PC-3 (cell line): ENCODE measurements at regions of chr14 and their contacts with region 1.

Region 1: DNA sequence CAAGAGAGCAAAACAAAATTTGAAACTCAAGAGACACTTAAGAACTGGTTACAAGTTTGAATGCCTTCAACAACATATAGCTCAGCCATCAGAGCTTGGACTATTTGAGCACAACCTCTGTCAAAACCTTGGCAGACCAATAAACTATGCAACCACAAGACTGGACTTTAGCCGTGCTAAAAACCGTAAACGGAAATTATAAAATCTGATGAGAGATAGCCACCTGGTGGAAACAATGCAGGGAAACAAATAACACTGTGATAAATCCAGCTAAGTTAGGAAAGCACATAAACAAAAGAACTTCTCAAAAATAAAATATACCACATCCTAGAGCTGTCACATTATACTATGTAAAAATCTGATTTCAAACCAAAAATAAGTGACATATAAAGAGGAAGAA is 1074.2 kb upstream of the NOVA1 start:
- DNase-seq: peak; percentile 22
- ATAC-seq: peak; percentile 84
- H3K4me3 ChIP-seq: no peak overlapping the region
- H3K27ac ChIP-seq: no peak overlapping the region
- H3K4me1 ChIP-seq: no peaks in the 10 kb centered on the region
- H3K27me3 ChIP-seq: no peaks in the 10 kb centered on the region
- CTCF ChIP-seq: peak; percentile 50; the same call in 1 of the 2 replicates

Region 2: DNA sequence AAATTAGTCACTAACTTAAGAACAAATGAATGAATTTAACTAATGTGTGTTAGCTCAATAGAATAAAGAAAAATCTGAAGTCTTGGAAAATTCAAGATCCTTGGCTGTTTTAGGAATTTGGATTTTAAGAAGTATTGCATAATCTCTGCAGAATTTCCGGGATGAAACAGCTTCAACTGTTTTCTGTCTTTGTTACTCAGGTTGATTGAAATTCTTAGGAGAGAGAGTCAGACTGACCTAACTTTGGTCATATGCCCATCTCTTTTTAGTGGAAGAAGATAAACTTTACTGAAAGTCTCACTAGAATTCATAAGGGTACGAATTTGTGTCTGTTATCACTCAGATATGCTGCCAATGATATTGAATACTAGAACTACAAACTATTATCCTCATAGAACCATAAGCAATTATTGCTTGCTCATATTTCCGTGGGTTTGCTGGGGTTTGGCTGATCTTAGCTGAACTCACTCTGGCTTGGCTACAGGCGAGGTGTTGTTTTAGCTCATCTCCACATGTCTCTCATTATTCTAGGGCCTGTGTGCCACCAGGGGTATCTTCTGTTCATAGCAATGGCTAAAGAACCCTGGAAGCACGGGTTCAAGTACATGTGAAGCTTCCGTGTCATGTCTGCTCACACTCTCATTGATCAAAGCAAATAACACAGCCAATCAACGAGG is 816.8 kb before region 1 on chr14:
- CTCF ChIA-PET with region 1: no interaction called
- POLR2A ChIA-PET with region 1: interaction called, 10 read pairs
- intact Hi-C with region 1: no loop called
- DNase-seq: peak; percentile 57
- ATAC-seq: peak; percentile 40; the same call in 1 of the 2 replicates
- H3K4me3 ChIP-seq: no peak overlapping the region
- H3K27ac ChIP-seq: no peak overlapping the region
- H3K4me1 ChIP-seq: peaks cover 11% of the 10 kb centered on the region
- H3K27me3 ChIP-seq: no peaks in the 10 kb centered on the region
- CTCF ChIP-seq: no peak

Region 3: GRCh38 chr14:27015065-27015464 is 657.0 kb before region 1 on chr14:
- CTCF ChIA-PET with region 1: no interaction called
- POLR2A ChIA-PET with region 1: no interaction called
- intact Hi-C with region 1: no loop called
- DNase-seq: no peak
- ATAC-seq: no peak
- H3K4me3 ChIP-seq: no peak overlapping the region
- H3K27ac ChIP-seq: no peak overlapping the region
- H3K4me1 ChIP-seq: no peaks in the 10 kb centered on the region
- H3K27me3 ChIP-seq: no peaks in the 10 kb centered on the region
- CTCF ChIP-seq: no peak

Region 4: GRCh38 chr14:27205036-27205435 is 467.0 kb before region 1 on chr14:
- CTCF ChIA-PET with region 1: no interaction called
- POLR2A ChIA-PET with region 1: interaction called, 10 read pairs
- intact Hi-C with region 1: no loop called
- DNase-seq: no peak
- ATAC-seq: no peak
- H3K4me3 ChIP-seq: no peak overlapping the region
- H3K27ac ChIP-seq: no peak overlapping the region
- H3K4me1 ChIP-seq: no peaks in the 10 kb centered on the region
- H3K27me3 ChIP-seq: no peaks in the 10 kb centered on the region
- CTCF ChIP-seq: no peak

Region 5: DNA sequence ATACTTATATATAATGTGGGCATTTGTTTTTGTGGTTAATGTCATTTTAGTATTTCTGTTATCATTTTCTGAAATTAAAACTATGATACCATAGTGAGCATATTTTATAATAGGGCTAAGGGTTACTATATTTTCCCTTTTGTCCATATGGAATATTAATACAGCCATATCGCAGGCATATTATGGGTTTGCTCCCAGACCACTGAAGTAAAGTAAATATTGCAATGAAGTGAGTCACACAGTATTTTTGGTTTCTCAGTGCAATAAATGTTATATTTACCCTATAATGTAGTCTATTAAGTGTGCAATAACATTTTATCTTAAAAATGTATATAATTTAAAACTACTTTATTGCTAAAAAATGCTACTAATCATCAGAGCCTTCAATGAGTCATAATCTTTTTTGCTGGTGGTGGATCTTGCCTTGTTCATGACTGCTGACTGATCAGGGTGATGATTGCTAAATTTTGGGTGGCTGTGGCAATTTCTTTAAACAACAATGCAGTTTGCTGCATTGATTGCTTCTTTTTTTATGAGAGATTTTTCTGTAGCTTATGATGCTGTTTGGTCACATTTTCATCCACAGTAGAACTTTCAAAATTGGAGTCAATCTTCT is 29.7 kb before region 1 on chr14:
- CTCF ChIA-PET with region 1: no interaction called
- POLR2A ChIA-PET with region 1: no interaction called
- intact Hi-C with region 1: loop called (anchors 2 kb)
- DNase-seq: peak; percentile 60
- ATAC-seq: peak; percentile 97
- H3K4me3 ChIP-seq: no peak overlapping the region
- H3K27ac ChIP-seq: peak overlapping the region; percentile 68
- H3K4me1 ChIP-seq: peaks cover 10% of the 10 kb centered on the region; the same call in 1 of the 2 replicates
- H3K27me3 ChIP-seq: no peaks in the 10 kb centered on the region
- CTCF ChIP-seq: no peak

Region 6: DNA sequence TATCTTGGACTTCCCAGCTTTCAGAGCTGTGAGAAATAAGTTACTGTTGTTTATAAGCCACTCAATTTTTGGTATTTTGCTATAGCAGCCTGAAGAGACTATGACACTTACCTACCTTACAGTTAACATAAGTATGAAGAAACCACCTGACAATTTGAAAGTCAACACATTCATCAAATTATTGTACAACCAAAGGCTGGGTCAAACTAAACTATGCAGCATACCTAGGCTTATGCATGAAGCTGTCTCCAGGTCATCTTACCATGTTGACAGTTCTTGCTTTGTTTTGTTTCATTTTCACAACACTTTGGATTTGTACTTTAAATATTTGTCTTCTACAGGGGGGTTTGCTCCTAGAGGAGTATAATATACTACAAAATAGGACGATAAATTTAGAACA is 239.6 kb after region 1 on chr14:
- CTCF ChIA-PET with region 1: no interaction called
- POLR2A ChIA-PET with region 1: no interaction called
- intact Hi-C with region 1: no loop called
- DNase-seq: no peak
- ATAC-seq: no peak
- H3K4me3 ChIP-seq: no peak overlapping the region
- H3K27ac ChIP-seq: no peak overlapping the region
- H3K4me1 ChIP-seq: no peaks in the 10 kb centered on the region
- H3K27me3 ChIP-seq: no peaks in the 10 kb centered on the region
- CTCF ChIP-seq: no peak

Region 7: GRCh38 chr14:28060921-28061405 is 388.9 kb after region 1 on chr14:
- CTCF ChIA-PET with region 1: no interaction called
- POLR2A ChIA-PET with region 1: no interaction called
- intact Hi-C with region 1: no loop called
- DNase-seq: no peak
- ATAC-seq: no peak
- H3K4me3 ChIP-seq: no peak overlapping the region
- H3K27ac ChIP-seq: no peak overlapping the region
- H3K4me1 ChIP-seq: no peaks in the 10 kb centered on the region
- H3K27me3 ChIP-seq: no peaks in the 10 kb centered on the region
- CTCF ChIP-seq: no peak

Region 8: GRCh38 chr14:28157887-28158791 is 486.1 kb after region 1 on chr14:
- CTCF ChIA-PET with region 1: no interaction called
- POLR2A ChIA-PET with region 1: no interaction called
- intact Hi-C with region 1: no loop called
- DNase-seq: no peak
- ATAC-seq: no peak
- H3K4me3 ChIP-seq: no peak overlapping the region
- H3K27ac ChIP-seq: no peak overlapping the region
- H3K4me1 ChIP-seq: no peaks in the 10 kb centered on the region
- H3K27me3 ChIP-seq: no peaks in the 10 kb centered on the region
- CTCF ChIP-seq: no peak